ENCODE measurements at regions of chr16 and their contacts with region 1.

Region 1: GRCh38 chr16:64272028-64272427 is 849.8 kb downstream of the CDH11 start:
- DNase-seq: no peak
- ATAC-seq: no peak
- H3K4me3 ChIP-seq: no peak overlapping the region
- H3K4me3 Mint-ChIP-seq: no peak overlapping the region
- H3K27ac ChIP-seq: no peak overlapping the region
- H3K27ac Mint-ChIP-seq: no peak overlapping the region
- H3K4me1 ChIP-seq: no peaks in the 10 kb centered on the region
- H3K4me1 Mint-ChIP-seq: no peaks in the 10 kb centered on the region
- H3K27me3 ChIP-seq: no peaks in the 10 kb centered on the region
- H3K27me3 Mint-ChIP-seq: no peaks in the 10 kb centered on the region
- CTCF ChIP-seq: no peak

Region 2: DNA sequence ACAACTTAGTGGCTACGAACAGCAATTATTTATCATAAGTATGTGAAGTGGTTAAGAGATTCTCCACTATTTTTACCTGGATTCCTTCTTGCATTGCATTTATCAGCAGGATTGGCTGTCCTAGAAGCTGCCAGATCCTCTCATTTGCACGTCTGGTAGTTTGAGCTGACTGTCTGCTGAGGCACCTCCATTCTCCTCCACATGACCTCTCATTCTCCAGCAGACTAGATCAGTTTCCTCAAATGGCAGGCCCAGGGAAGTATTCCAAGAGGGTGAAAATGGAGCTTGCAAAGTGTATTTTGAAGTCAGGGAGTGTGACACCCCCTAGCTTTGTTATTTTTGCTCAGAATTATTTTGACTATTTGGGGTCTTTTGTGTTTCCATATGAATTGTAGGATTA is 20.3 kb before region 1 on chr16:
- CTCF ChIA-PET with region 1: no interaction called
- POLR2A ChIA-PET with region 1: no interaction called
- intact Hi-C with region 1: loop called in 1 of 2 experiments (anchors 2 kb)
- DNase-seq: no peak
- ATAC-seq: no peak
- H3K4me3 ChIP-seq: no peak overlapping the region
- H3K4me3 Mint-ChIP-seq: no peak overlapping the region
- H3K27ac ChIP-seq: no peak overlapping the region
- H3K27ac Mint-ChIP-seq: no peak overlapping the region
- H3K4me1 ChIP-seq: no peaks in the 10 kb centered on the region
- H3K4me1 Mint-ChIP-seq: no peaks in the 10 kb centered on the region
- H3K27me3 ChIP-seq: no peaks in the 10 kb centered on the region
- H3K27me3 Mint-ChIP-seq: no peaks in the 10 kb centered on the region
- CTCF ChIP-seq: no peak

Region 3: GRCh38 chr16:64440421-64440831 is 168.4 kb after region 1 on chr16:
- CTCF ChIA-PET with region 1: no interaction called
- POLR2A ChIA-PET with region 1: no interaction called
- intact Hi-C with region 1: no loop called
- DNase-seq: no peak
- ATAC-seq: no peak
- H3K4me3 ChIP-seq: no peak overlapping the region
- H3K4me3 Mint-ChIP-seq: no peak overlapping the region
- H3K27ac ChIP-seq: no peak overlapping the region
- H3K27ac Mint-ChIP-seq: no peak overlapping the region
- H3K4me1 ChIP-seq: no peaks in the 10 kb centered on the region
- H3K4me1 Mint-ChIP-seq: no peaks in the 10 kb centered on the region
- H3K27me3 ChIP-seq: no peaks in the 10 kb centered on the region
- H3K27me3 Mint-ChIP-seq: no peaks in the 10 kb centered on the region
- CTCF ChIP-seq: no peak

Region 4: GRCh38 chr16:64507240-64508024 is 235.4 kb after region 1 on chr16:
- CTCF ChIA-PET with region 1: no interaction called
- POLR2A ChIA-PET with region 1: no interaction called
- intact Hi-C with region 1: no loop called
- DNase-seq: no peak
- ATAC-seq: no peak
- H3K4me3 ChIP-seq: no peak overlapping the region
- H3K4me3 Mint-ChIP-seq: no peak overlapping the region
- H3K27ac ChIP-seq: no peak overlapping the region
- H3K27ac Mint-ChIP-seq: no peak overlapping the region
- H3K4me1 ChIP-seq: no peaks in the 10 kb centered on the region
- H3K4me1 Mint-ChIP-seq: no peaks in the 10 kb centered on the region
- H3K27me3 ChIP-seq: no peaks in the 10 kb centered on the region
- H3K27me3 Mint-ChIP-seq: no peaks in the 10 kb centered on the region
- CTCF ChIP-seq: no peak

Measured in CD4-positive, alpha-beta T cell (primary cell).